Ovary (tissue), 10 donors: ENCODE measurements at regions of chr1 and their contacts with region 1.

Region 1: GRCh38 chr1:42173155-42173933 is 8.8 kb upstream of the GUCA2A start:
- DNase-seq: peak in 4 of 5 donors; percentile 58 to 75 (median 66)
- H3K4me3 ChIP-seq: no peak overlapping the region
- H3K27ac ChIP-seq: no peak overlapping the region
- H3K4me1 ChIP-seq: peaks cover 6% of the 10 kb centered on the region
- H3K27me3 ChIP-seq: no peaks in the 10 kb centered on the region
- CTCF ChIP-seq: peak; percentile 67 to 77 (median 75)
- EP300 ChIP-seq: no peak
- POLR2A ChIP-seq: no peak

Region 2: DNA sequence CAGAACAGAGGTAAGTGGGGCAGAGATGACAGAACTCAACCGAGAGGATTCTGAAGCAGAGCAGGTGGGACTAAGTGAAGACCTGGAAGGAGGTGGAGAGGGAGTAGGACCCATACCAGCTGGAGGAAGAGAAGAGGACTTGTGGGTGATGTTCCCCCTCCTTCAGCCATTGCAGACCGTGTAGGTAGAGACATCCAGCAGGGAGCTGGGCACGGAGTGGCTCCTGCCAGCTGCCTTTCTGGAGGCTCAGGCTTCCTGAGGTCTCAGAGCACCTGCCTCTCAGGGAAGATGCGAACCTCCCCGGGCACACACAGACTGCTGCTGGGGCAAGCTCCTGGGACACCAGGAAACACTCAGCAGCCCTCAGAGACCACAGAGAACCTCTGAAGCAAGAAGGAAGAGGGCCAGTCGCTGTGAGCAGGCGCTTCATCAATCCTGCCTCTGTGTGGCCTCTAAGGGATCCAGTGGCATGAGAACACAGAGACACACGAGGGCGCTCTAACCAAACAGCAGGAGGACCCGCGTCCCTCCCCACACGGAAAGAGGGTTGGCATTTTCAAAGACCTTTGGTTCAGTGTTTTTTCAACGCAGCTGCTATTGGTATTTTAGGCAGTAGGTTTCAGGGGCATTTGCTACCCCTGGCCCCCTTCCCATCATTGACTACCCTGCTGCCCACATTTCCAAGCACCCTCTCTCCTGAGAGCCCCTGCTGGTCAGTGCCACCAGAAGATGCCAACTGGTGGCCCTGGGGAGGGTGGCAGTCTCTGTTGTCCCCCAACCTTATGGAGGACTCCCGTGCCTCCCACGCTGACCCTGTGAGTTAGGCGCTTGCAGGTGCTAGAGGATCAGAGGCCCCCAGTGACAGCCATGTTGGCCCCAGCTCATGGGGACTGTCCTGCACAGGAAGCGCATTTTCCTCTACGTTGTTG is 599.3 kb before region 1 on chr1:
- intact Hi-C with region 1: loop called in 3 of 4 experiments (anchors 10 kb)
- DNase-seq: peak; percentile 62 to 82 (median 73)
- H3K4me3 ChIP-seq: no peak overlapping the region
- H3K27ac ChIP-seq: no peak overlapping the region
- H3K4me1 ChIP-seq: no peaks in the 10 kb centered on the region
- H3K27me3 ChIP-seq: no peaks in the 10 kb centered on the region
- CTCF ChIP-seq: peak; percentile 45 to 59 (median 51)
- EP300 ChIP-seq: no peak
- POLR2A ChIP-seq: no peak

Region 3: GRCh38 chr1:41802532-41803501 is 370.5 kb before region 1 on chr1:
- intact Hi-C with region 1: loop called in 1 of 4 experiments (anchors 10 kb)
- DNase-seq: peak in 2 of 5 donors; percentile 22 to 37
- H3K4me3 ChIP-seq: no peak overlapping the region
- H3K27ac ChIP-seq: no peak overlapping the region
- H3K4me1 ChIP-seq: no peaks in the 10 kb centered on the region
- H3K27me3 ChIP-seq: no peaks in the 10 kb centered on the region
- CTCF ChIP-seq: no peak
- EP300 ChIP-seq: no peak
- POLR2A ChIP-seq: no peak

Region 4: GRCh38 chr1:42146626-42147320 is 26.6 kb before region 1 on chr1:
- intact Hi-C with region 1: no loop called
- DNase-seq: peak; percentile 31 to 74 (median 66)
- H3K4me3 ChIP-seq: no peak overlapping the region
- H3K27ac ChIP-seq: no peak overlapping the region
- H3K4me1 ChIP-seq: no peaks in the 10 kb centered on the region
- H3K27me3 ChIP-seq: no peaks in the 10 kb centered on the region
- CTCF ChIP-seq: peak in 2 of 3 donors; percentile 59 to 67
- EP300 ChIP-seq: no peak
- POLR2A ChIP-seq: no peak

Region 5: DNA sequence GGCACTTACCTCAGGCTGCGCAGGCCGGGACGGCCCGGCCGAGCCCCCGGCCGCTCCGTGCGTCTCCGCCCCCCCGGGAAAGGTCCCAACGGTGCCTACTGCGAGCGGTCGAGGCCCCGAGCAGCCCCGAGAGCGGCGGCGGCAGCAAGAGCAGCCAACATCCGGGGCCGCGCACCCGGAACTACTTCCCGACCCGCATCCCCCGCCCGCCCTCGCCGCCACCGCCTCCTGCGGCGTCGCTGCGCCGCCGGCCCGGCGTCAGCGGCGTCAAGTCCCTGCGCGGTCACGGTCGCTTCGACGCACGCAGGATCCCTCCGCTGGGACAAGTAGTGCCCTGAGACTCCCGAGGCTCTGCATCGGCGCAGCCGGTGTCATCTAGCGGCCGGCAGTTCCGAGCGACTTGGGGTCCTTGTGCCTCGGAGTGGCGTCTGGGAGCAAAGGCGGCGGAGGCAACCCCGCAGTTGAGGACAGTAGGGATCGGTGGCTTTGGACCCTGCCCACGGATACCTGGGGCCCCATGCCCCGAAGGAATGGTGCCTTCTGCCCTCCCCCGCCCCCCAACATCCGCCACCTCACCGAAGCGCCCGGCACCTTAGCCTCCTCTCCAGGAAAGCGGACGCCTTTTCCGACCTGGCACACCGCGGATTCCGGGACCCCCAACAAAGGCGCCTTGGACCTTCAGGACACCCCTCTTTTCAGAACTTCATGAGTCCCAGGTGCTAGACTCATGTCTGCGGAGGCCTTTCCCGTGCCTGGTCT is 161.9 kb after region 1 on chr1 and contains the start of gene FOXJ3:
- intact Hi-C with region 1: loop called in 1 of 4 experiments (anchors 10 kb)
- DNase-seq: peak; percentile 85 to 95 (median 93)
- H3K4me3 ChIP-seq: peak within 1 kb of the TSS; percentile 90
- H3K27ac ChIP-seq: peak within 1 kb of the TSS; percentile 64 to 80
- H3K4me1 ChIP-seq: peaks cover 4% of the 10 kb centered on the region
- H3K27me3 ChIP-seq: no peaks in the 10 kb centered on the region
- CTCF ChIP-seq: no peak
- EP300 ChIP-seq: no peak
- POLR2A ChIP-seq: peak; percentile 50
- total RNA-seq, gene FOXJ3: 36.4 to 59.0 (median 49.4) TPM

Region 6: DNA sequence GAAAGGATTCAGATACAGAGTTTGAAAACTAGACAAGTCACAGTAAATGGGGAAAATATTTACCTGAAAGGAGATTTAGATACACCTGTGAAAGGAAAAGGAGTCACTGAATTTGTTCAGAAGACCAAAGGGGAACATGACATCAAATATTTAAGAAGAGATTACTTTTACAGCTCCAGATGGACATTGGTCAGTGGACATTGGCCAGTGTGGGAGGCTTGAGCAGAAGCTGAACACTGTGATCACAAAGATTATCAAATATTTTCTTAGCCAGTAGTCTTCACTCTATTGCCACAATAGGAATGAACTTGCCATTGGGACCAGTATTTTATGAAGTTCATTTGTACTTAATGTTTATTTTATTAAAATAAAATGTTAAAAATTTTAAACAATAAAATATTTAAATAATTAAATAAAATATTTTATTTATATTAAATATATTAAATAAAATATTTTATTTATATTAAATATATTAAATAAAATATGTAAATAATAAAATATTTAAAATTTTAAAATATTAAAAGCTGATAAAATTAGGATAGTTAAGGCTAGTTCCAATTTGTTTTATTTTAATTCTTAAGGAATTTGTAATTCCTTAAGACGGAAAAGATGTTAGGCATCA is 384.0 kb after region 1 on chr1:
- intact Hi-C with region 1: no loop called
- DNase-seq: no peak
- H3K4me3 ChIP-seq: no peak overlapping the region
- H3K27ac ChIP-seq: no peak overlapping the region
- H3K4me1 ChIP-seq: no peaks in the 10 kb centered on the region
- H3K27me3 ChIP-seq: no peaks in the 10 kb centered on the region
- CTCF ChIP-seq: no peak
- EP300 ChIP-seq: no peak
- POLR2A ChIP-seq: no peak